PC-9 (cell line): ENCODE measurements at regions of chr3 and their contacts with region 1.

Region 1: DNA sequence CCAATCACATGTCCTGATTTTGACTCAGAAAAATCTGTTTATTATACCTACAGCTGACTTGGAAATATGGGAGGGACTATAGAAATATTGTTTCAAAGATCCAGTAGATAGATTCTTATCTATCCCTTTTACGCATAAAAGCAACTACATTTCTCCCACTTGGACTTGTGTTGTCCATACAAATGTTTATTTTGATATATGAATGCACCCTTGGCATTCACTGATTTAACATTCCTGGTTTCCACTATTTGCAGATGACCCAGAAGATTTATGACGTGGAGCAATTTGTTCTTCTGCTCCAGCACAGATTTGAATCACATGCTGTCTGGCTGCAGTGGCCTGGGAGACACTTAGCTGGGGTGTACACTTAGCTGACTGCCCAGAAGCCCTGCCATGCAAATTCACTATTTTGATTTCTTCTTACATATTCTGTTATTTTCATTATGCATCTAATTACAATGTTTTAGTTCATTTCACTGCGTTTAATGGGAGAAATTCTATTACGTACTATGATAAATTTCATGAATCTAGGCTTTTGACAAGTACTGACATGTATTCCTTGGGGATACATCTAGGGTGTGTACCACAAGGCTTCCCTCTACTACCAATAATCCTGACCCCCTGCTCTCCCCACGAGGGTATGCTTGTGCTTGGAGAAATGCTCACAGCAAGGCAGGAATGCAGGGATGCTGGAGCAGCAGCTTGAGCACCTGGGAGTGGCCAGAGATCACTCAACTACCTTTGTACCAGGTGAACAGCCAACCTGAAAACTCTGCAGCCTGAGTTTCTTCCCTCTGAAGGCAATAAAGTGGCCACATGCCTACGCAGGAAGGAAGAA is 223.6 kb upstream of the TBL1XR1 start:
- DNase-seq: peak in 1 of 2 experiments; percentile 52
- H3K4me3 ChIP-seq: no peak overlapping the region
- H3K27ac ChIP-seq: no peak overlapping the region
- H3K4me1 ChIP-seq: 0 out of 2 replicates have a peak, but pooled peaks cover 7% of the 10 kb centered on the region
- H3K27me3 ChIP-seq: no peaks in the 10 kb centered on the region
- CTCF ChIP-seq: no peak

Region 2: DNA sequence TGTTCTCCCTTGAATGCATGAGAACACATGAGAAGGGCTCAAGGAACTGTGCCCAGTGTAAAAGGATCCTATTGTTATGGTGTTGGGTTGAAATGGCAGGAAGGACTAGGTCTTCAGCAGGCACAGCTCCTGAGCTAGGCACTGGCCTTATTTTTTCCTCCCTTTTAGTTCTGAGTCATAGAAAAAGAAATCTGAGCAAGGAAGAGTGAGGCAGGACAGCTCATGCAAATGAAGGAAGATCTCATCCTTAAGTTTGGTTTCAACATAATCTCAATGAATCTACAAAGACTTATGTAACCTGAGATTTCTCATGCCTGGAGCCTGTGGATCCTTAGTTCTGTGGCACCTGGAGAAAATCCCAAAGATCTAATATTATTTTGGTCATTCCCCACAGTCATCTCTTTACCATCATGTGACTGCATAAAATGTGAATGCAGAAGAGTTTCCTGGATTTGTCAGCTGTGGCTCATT is 35.0 kb before region 1 on chr3:
- CTCF ChIA-PET with region 1: interaction called, 10 read pairs
- POLR2A ChIA-PET with region 1: no interaction called
- intact Hi-C with region 1: no loop called
- DNase-seq: peak in 1 of 2 experiments; percentile 43
- H3K4me3 ChIP-seq: no peak overlapping the region
- H3K27ac ChIP-seq: no peak overlapping the region
- H3K4me1 ChIP-seq: 0 out of 2 replicates have a peak, but pooled peaks cover 8% of the 10 kb centered on the region
- H3K27me3 ChIP-seq: no peaks in the 10 kb centered on the region
- CTCF ChIP-seq: no peak

Region 3: GRCh38 chr3:177431525-177432176 is 10.8 kb after region 1 on chr3:
- CTCF ChIA-PET with region 1: no interaction called
- POLR2A ChIA-PET with region 1: no interaction called
- intact Hi-C with region 1: no loop called
- DNase-seq: no peak
- H3K4me3 ChIP-seq: no peak overlapping the region
- H3K27ac ChIP-seq: no peak overlapping the region
- H3K4me1 ChIP-seq: no peaks in the 10 kb centered on the region
- H3K27me3 ChIP-seq: no peaks in the 10 kb centered on the region
- CTCF ChIP-seq: no peak

Region 4: DNA sequence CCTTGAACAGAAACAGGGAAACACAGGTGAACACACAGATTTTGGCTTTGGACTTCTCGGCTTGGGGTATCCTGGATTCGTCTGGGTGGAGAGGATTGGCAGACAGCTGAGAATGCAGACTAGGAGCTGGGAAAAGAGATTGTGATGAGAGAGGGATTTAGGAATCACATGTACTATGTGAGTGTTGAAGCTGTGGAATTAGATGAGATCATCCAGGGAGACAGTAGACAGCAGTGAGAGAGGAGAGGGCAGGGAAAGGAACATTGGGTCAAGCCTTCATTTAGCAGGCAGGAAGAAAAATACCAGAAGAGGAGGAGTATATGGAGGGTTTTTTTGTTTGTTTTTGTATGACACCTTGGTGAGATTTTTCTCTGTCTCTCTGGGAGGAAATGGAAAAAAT is 38.5 kb after region 1 on chr3:
- CTCF ChIA-PET with region 1: no interaction called
- POLR2A ChIA-PET with region 1: no interaction called
- intact Hi-C with region 1: no loop called
- DNase-seq: no peak
- H3K4me3 ChIP-seq: no peak overlapping the region
- H3K27ac ChIP-seq: no peak overlapping the region
- H3K4me1 ChIP-seq: no peaks in the 10 kb centered on the region; the same call in 1 of the 2 replicates
- H3K27me3 ChIP-seq: no peaks in the 10 kb centered on the region
- CTCF ChIP-seq: no peak

Region 5: DNA sequence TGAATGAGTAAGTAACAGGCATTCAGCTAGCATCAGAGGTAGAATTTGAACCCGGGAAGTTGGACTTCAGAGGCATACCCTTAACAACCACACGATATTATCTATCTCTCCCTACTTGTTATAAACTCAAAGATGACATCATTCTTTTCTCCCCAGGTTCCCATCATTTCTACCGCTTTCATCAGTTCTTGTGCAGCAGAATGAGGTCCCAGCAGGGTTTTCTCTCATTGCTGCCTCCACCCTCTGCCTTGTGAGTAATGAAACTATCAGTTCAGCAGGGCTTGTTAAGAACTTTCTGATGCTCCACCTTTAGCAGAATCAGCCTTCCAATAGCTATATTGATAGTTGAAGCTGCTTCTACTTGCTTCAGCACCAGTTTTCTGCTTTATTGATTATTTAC is 627.9 kb after region 1 on chr3:
- CTCF ChIA-PET with region 1: no interaction called
- POLR2A ChIA-PET with region 1: no interaction called
- intact Hi-C with region 1: no loop called
- DNase-seq: no peak
- H3K4me3 ChIP-seq: no peak overlapping the region
- H3K27ac ChIP-seq: no peak overlapping the region
- H3K4me1 ChIP-seq: no peaks in the 10 kb centered on the region
- H3K27me3 ChIP-seq: no peaks in the 10 kb centered on the region
- CTCF ChIP-seq: no peak